ENCODE measurements at regions of chr3 and their contacts with region 1.

Region 1: GRCh38 chr3:188000361-188000861 is 153.5 kb upstream of the LPP start:
- DNase-seq: peak in 4 of 35 experiments; percentile 10 to 40 (median 18)
- ATAC-seq: peak in 3 of 4 experiments; percentile 28 to 50 (median 34)
- H3K4me3 ChIP-seq: no peak overlapping the region
- H3K4me3 Mint-ChIP-seq: peak overlapping the region; percentile 63 to 75 (median 64)
- H3K27ac ChIP-seq: peak overlapping the region; percentile 89
- H3K27ac Mint-ChIP-seq: peak overlapping the region; percentile 94 to 98
- H3K4me1 ChIP-seq: peaks cover 20 to 29% of the 10 kb centered on the region in 2 experiments
- H3K4me1 Mint-ChIP-seq: peaks cover 72 to 74% (median 73%) of the 10 kb centered on the region in 3 donors
- H3K27me3 ChIP-seq: no peaks in the 10 kb centered on the region
- H3K27me3 Mint-ChIP-seq: no peaks in the 10 kb centered on the region

Region 2: GRCh38 chr3:188362405-188362831 is 362.0 kb after region 1 on chr3:
- CTCF ChIA-PET with region 1: no interaction called
- POLR2A ChIA-PET with region 1: interaction called in 1 of 2 experiments, 11 read pairs
- DNase-seq: peak in 1 of 35 experiments; percentile 25
- ATAC-seq: peak in 3 of 4 experiments; percentile 25 to 42 (median 31)
- H3K4me3 ChIP-seq: no peak overlapping the region
- H3K4me3 Mint-ChIP-seq: peak overlapping the region in 1 of 3 donors; percentile 9
- H3K27ac ChIP-seq: no peak overlapping the region
- H3K27ac Mint-ChIP-seq: peak overlapping the region in 1 of 2 donors; percentile 32
- H3K4me1 ChIP-seq: peaks cover 24 to 31% of the 10 kb centered on the region in 2 experiments
- H3K4me1 Mint-ChIP-seq: peaks cover 38 to 69% (median 55%) of the 10 kb centered on the region in 3 donors
- H3K27me3 ChIP-seq: no peaks in the 10 kb centered on the region
- H3K27me3 Mint-ChIP-seq: no peaks in the 10 kb centered on the region